Naive thymus-derived CD4-positive, alpha-beta T cell (primary cell): ENCODE measurements at regions of chr19 and their contacts with region 1.

Region 1: GRCh38 chr19:3762501-3763459 is at the start of gene MRPL54:
- DNase-seq: peak; percentile 98 to 100 (median 100)
- ATAC-seq: peak; percentile 89
- H3K4me3 ChIP-seq: peak within 1 kb of the TSS; percentile 96
- H3K4me3 Mint-ChIP-seq: peak within 1 kb of the TSS; percentile 93 to 99 (median 98)
- H3K27ac ChIP-seq: peak within 1 kb of the TSS; percentile 100
- H3K27ac Mint-ChIP-seq: peak within 1 kb of the TSS; percentile 99 to 100 (median 100)
- H3K4me1 ChIP-seq: peaks cover 19 to 44% of the 10 kb centered on the region in 2 donors
- H3K4me1 Mint-ChIP-seq: peaks cover 23 to 59% (median 39%) of the 10 kb centered on the region in 7 donors
- H3K27me3 ChIP-seq: no peaks in the 10 kb centered on the region
- H3K27me3 Mint-ChIP-seq: peaks cover 0 to 5% (median 0%) of the 10 kb centered on the region in 5 donors
- total RNA-seq, gene MRPL54: 34.0 to 95.2 (median 58.8) TPM

Region 2: GRCh38 chr19:3572132-3572854 is 190.5 kb before region 1 on chr19:
- CTCF ChIA-PET with region 1: no interaction called
- POLR2A ChIA-PET with region 1: interaction called, 3 read pairs
- intact Hi-C with region 1: loop called (anchors 2 kb)
- DNase-seq: peak; percentile 94 to 99 (median 98)
- ATAC-seq: peak; percentile 96
- H3K4me3 ChIP-seq: peak overlapping the region; percentile 75
- H3K4me3 Mint-ChIP-seq: peak overlapping the region; percentile 72 to 91 (median 82)
- H3K27ac ChIP-seq: peak overlapping the region; percentile 62
- H3K27ac Mint-ChIP-seq: peak overlapping the region in 8 of 9 donors; percentile 30 to 84 (median 61)
- H3K4me1 ChIP-seq: peaks cover 12 to 13% of the 10 kb centered on the region in 2 donors
- H3K4me1 Mint-ChIP-seq: peaks cover 11 to 29% (median 14%) of the 10 kb centered on the region in 7 donors
- H3K27me3 ChIP-seq: no peaks in the 10 kb centered on the region
- H3K27me3 Mint-ChIP-seq: no peaks in the 10 kb centered on the region

Region 3: DNA sequence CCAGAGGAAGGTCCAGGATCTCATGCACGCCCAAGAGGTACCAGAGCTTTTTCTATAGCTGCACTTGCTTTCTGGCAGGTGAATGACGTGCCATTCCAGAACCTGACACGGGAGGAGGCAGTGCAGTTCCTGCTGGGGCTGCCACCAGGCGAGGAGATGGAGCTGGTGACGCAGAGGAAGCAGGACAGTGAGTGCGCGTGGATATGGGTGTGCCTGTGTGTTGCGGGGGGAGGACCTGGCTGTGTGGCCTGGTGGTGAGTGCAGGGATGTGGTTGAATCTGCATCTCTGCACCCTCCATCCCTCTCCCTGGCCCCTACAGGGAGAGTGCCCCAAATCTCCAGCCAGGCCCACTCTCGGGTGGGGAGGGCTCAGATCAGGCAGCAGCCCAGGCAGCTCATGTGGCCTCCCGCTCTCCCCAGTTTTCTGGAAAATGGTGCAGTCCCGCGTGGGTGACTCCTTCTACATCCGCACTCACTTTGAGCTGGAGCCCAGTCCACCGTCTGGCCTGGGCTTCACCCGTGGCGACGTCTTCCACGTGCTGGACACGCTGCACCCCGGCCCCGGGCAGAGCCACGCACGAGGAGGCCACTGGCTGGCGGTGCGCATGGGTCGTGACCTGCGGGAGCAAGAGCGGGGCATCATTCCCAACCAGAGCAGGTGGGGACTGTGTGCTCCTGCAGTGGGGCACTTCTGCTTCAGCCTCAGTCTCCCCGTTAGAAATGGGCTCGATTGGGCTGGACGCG is 24.1 kb before region 1 on chr19:
- CTCF ChIA-PET with region 1: interaction called, 6 read pairs
- POLR2A ChIA-PET with region 1: interaction called, 21 read pairs
- intact Hi-C with region 1: no loop called
- DNase-seq: no peak
- ATAC-seq: no peak
- H3K4me3 ChIP-seq: no peak overlapping the region
- H3K4me3 Mint-ChIP-seq: peak overlapping the region in 4 of 10 donors; percentile 30 to 54 (median 42)
- H3K27ac ChIP-seq: no peak overlapping the region
- H3K27ac Mint-ChIP-seq: peak overlapping the region; percentile 32 to 93 (median 71)
- H3K4me1 ChIP-seq: peaks cover 0 to 18% of the 10 kb centered on the region in 2 donors
- H3K4me1 Mint-ChIP-seq: peaks cover 3 to 20% (median 17%) of the 10 kb centered on the region in 7 donors
- H3K27me3 ChIP-seq: no peaks in the 10 kb centered on the region
- H3K27me3 Mint-ChIP-seq: no peaks in the 10 kb centered on the region

Region 4: GRCh38 chr19:3970808-3971598 is 208.2 kb after region 1 on chr19 and contains the start of gene DAPK3:
- CTCF ChIA-PET with region 1: no interaction called
- POLR2A ChIA-PET with region 1: interaction called, 3 read pairs
- intact Hi-C with region 1: loop called in 1 of 2 experiments (anchors 1 kb)
- DNase-seq: peak; percentile 75 to 97 (median 86)
- ATAC-seq: peak; percentile 97
- H3K4me3 ChIP-seq: peak within 1 kb of the TSS; percentile 90
- H3K4me3 Mint-ChIP-seq: peak within 1 kb of the TSS; percentile 64 to 98 (median 90)
- H3K27ac ChIP-seq: peak within 1 kb of the TSS; percentile 90
- H3K27ac Mint-ChIP-seq: peak within 1 kb of the TSS; percentile 44 to 89 (median 83)
- H3K4me1 ChIP-seq: peaks cover 13 to 16% of the 10 kb centered on the region in 2 donors
- H3K4me1 Mint-ChIP-seq: peaks cover 13 to 34% (median 29%) of the 10 kb centered on the region in 7 donors
- H3K27me3 ChIP-seq: no peaks in the 10 kb centered on the region
- H3K27me3 Mint-ChIP-seq: no peaks in the 10 kb centered on the region
- total RNA-seq, gene DAPK3: 24.7 to 40.3 (median 33.9) TPM

Region 5: GRCh38 chr19:4164262-4164661 is 401.5 kb after region 1 on chr19:
- CTCF ChIA-PET with region 1: no interaction called
- POLR2A ChIA-PET with region 1: no interaction called
- intact Hi-C with region 1: no loop called
- DNase-seq: no peak
- ATAC-seq: no peak
- H3K4me3 ChIP-seq: no peak overlapping the region
- H3K4me3 Mint-ChIP-seq: no peak overlapping the region
- H3K27ac ChIP-seq: no peak overlapping the region
- H3K27ac Mint-ChIP-seq: no peak overlapping the region
- H3K4me1 ChIP-seq: no peaks in the 10 kb centered on the region
- H3K4me1 Mint-ChIP-seq: peaks cover 0 to 1% (median 0%) of the 10 kb centered on the region in 7 donors
- H3K27me3 ChIP-seq: no peaks in the 10 kb centered on the region
- H3K27me3 Mint-ChIP-seq: peaks cover 0 to 34% (median 16%) of the 10 kb centered on the region in 5 donors

Region 6: DNA sequence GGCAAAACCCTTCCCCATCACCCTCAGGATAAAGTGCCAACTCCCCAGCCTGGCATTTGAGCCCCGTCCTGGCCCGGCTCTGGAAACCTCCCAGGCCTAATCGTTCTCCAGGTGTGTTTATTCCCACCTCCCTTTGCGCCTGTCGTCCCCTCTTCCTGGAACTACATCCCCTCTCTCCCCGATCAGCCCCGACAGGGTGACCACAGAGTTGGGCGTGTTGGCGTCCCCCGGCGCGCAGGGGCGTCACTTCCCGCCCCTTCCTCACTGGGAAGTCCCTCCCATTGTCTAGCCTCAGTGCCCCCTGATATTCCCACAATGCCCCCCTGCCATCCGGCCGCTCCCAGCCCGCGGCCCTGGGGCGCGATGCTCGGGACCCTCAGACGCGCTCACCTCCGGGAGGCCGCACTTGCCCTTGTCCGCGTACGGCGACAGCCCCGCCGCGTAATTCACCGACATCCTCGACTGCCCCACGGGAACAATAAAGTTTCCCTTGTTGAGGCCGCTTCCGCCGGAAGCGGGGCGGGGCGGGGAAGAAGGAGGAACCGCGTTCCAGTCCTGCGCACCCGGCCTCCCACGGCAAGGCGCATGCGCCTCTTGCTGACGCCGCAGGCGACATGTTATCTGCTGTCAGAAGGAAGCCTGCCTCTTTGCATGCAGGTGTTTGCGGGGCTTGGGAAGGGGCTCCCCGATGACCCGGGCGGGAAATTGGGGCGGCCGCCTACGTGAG is 419.5 kb after region 1 on chr19 and contains the starts of genes ANKRD24 and SIRT6:
- CTCF ChIA-PET with region 1: interaction called, 3 read pairs
- POLR2A ChIA-PET with region 1: interaction called, 3 read pairs
- intact Hi-C with region 1: loop called (anchors 1 to 5 kb)
- DNase-seq: peak; percentile 91 to 97 (median 96)
- ATAC-seq: peak; percentile 90
- H3K4me3 ChIP-seq: peak within 1 kb of the TSS; percentile 90
- H3K4me3 Mint-ChIP-seq: peak within 1 kb of the TSS; percentile 92 to 99 (median 96)
- H3K27ac ChIP-seq: peak within 1 kb of the TSS; percentile 86
- H3K27ac Mint-ChIP-seq: peak within 1 kb of the TSS; percentile 92 to 98 (median 95)
- H3K4me1 ChIP-seq: peaks cover 14 to 15% of the 10 kb centered on the region in 2 donors
- H3K4me1 Mint-ChIP-seq: peaks cover 25 to 44% (median 39%) of the 10 kb centered on the region in 7 donors
- H3K27me3 ChIP-seq: no peaks in the 10 kb centered on the region
- H3K27me3 Mint-ChIP-seq: peaks cover 0 to 2% (median 0%) of the 10 kb centered on the region in 5 donors
- total RNA-seq, gene ANKRD24: 0.75 to 2.8 (median 2.4) TPM
- total RNA-seq, gene SIRT6: 20.0 to 41.2 (median 26.0) TPM

Region 7: GRCh38 chr19:4968462-4969291 is 1205.9 kb after region 1 on chr19 and contains the start of gene KDM4B:
- CTCF ChIA-PET with region 1: no interaction called
- POLR2A ChIA-PET with region 1: no interaction called
- intact Hi-C with region 1: loop called in 1 of 2 experiments (anchors 5 kb)
- DNase-seq: peak; percentile 97 to 100 (median 99)
- ATAC-seq: peak; percentile 94
- H3K4me3 ChIP-seq: peak within 1 kb of the TSS; percentile 69
- H3K4me3 Mint-ChIP-seq: peak within 1 kb of the TSS; percentile 88 to 97 (median 94)
- H3K27ac ChIP-seq: peak within 1 kb of the TSS; percentile 67
- H3K27ac Mint-ChIP-seq: peak within 1 kb of the TSS; percentile 84 to 96 (median 91)
- H3K4me1 ChIP-seq: peaks cover 26 to 29% of the 10 kb centered on the region in 2 donors
- H3K4me1 Mint-ChIP-seq: peaks cover 26 to 40% (median 32%) of the 10 kb centered on the region in 7 donors
- H3K27me3 ChIP-seq: no peaks in the 10 kb centered on the region
- H3K27me3 Mint-ChIP-seq: no peaks in the 10 kb centered on the region
- total RNA-seq, gene KDM4B: 45.8 to 78.0 (median 65.8) TPM